Activated naive CD4-positive, alpha-beta T cell treated with anti-CD3 and anti-CD28 coated beads for 36 hours (primary cell): ENCODE measurements at regions of chr20 and their contacts with region 1.

Region 1: GRCh38 chr20:63537525-63538203 is 488 bp upstream of the PTK6 start:
- DNase-seq: peak; percentile 98
- H3K4me3 Mint-ChIP-seq: peak overlapping the region; percentile 74
- H3K27ac Mint-ChIP-seq: peak overlapping the region; percentile 84
- H3K4me1 Mint-ChIP-seq: peaks cover 11% of the 10 kb centered on the region
- H3K27me3 Mint-ChIP-seq: no peaks in the 10 kb centered on the region

Region 2: GRCh38 chr20:63442100-63442493 is 95.6 kb before region 1 on chr20:
- CTCF ChIA-PET with region 1: no interaction called
- intact Hi-C with region 1: loop called (anchors 5 kb)
- DNase-seq: peak; percentile 85
- H3K4me3 Mint-ChIP-seq: no peak overlapping the region
- H3K27ac Mint-ChIP-seq: no peak overlapping the region
- H3K4me1 Mint-ChIP-seq: peaks cover 20% of the 10 kb centered on the region
- H3K27me3 Mint-ChIP-seq: peaks cover 1% of the 10 kb centered on the region

Region 3: GRCh38 chr20:63471983-63472831 is 65.5 kb before region 1 on chr20 and contains the start of gene KCNQ2:
- CTCF ChIA-PET with region 1: no interaction called
- intact Hi-C with region 1: no loop called
- DNase-seq: no peak
- H3K4me3 Mint-ChIP-seq: no peak within 1 kb of the TSS
- H3K27ac Mint-ChIP-seq: no peak within 1 kb of the TSS
- H3K4me1 Mint-ChIP-seq: peaks cover 3% of the 10 kb centered on the region
- H3K27me3 Mint-ChIP-seq: peaks cover 33% of the 10 kb centered on the region
- total RNA-seq, gene KCNQ2: not detected

Region 4: GRCh38 chr20:63580796-63581461 is 43.3 kb after region 1 on chr20:
- CTCF ChIA-PET with region 1: interaction called, 3 read pairs
- intact Hi-C with region 1: loop called (anchors 2 kb)
- DNase-seq: peak; percentile 88
- H3K4me3 Mint-ChIP-seq: no peak overlapping the region
- H3K27ac Mint-ChIP-seq: no peak overlapping the region
- H3K4me1 Mint-ChIP-seq: peaks cover 5% of the 10 kb centered on the region
- H3K27me3 Mint-ChIP-seq: no peaks in the 10 kb centered on the region

Region 5: GRCh38 chr20:63657937-63658748 is 120.5 kb after region 1 on chr20 and contains the start of gene RTEL1:
- CTCF ChIA-PET with region 1: interaction called, 3 read pairs
- intact Hi-C with region 1: loop called (anchors 1 kb)
- DNase-seq: peak; percentile 88
- H3K4me3 Mint-ChIP-seq: peak within 1 kb of the TSS; percentile 98
- H3K27ac Mint-ChIP-seq: peak within 1 kb of the TSS; percentile 93
- H3K4me1 Mint-ChIP-seq: peaks cover 38% of the 10 kb centered on the region
- H3K27me3 Mint-ChIP-seq: no peaks in the 10 kb centered on the region
- total RNA-seq, gene RTEL1: 33.6 to 34.8 TPM

Region 6: GRCh38 chr20:63791497-63792156 is 254.0 kb after region 1 on chr20:
- CTCF ChIA-PET with region 1: interaction called, 3 read pairs
- intact Hi-C with region 1: loop called (anchors 1 kb)
- DNase-seq: no peak
- H3K4me3 Mint-ChIP-seq: no peak overlapping the region
- H3K27ac Mint-ChIP-seq: no peak overlapping the region
- H3K4me1 Mint-ChIP-seq: peaks cover 5% of the 10 kb centered on the region
- H3K27me3 Mint-ChIP-seq: peaks cover 5% of the 10 kb centered on the region

Region 7: DNA sequence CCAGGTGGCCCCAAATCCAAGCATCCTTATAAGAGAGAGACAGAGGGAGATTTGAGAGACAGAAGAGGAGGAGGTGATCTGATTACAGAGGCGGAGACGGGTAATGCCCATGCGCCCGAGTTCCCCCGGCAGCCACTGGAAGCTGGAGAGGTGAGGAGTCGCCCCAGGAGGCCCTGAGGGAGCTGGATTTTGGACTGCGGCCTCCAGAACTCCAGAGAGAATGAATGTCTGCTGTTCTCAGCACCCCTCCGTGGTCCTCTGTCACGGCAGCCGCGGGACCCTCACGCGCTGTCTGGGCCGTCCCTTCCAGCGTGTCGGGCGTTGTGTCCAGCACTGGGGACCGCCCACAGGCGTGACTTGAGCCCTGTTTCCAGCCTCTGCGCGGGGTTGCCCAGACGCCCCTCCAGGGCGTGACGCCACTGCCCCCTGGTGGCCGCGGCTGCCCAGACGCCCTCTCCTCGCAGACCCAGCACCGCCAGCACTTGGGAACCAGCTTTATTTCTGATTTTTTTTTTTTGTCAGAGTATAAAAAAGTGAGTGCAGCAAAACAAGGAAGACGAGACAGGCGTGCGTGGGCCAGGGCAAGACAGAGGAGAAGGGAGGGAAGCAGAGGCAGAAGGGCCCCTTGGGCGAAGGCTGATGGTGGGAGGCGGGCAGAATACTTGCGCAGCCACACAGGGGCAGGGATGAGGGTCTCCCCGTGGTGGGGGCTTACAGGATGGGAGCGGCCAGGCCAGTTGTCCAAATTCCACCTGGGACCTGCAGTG is 436.2 kb after region 1 on chr20:
- CTCF ChIA-PET with region 1: no interaction called
- intact Hi-C with region 1: loop called (anchors 1 kb)
- DNase-seq: peak; percentile 79
- H3K4me3 Mint-ChIP-seq: no peak overlapping the region
- H3K27ac Mint-ChIP-seq: peak overlapping the region; percentile 15
- H3K4me1 Mint-ChIP-seq: peaks cover 41% of the 10 kb centered on the region
- H3K27me3 Mint-ChIP-seq: no peaks in the 10 kb centered on the region

Region 8: DNA sequence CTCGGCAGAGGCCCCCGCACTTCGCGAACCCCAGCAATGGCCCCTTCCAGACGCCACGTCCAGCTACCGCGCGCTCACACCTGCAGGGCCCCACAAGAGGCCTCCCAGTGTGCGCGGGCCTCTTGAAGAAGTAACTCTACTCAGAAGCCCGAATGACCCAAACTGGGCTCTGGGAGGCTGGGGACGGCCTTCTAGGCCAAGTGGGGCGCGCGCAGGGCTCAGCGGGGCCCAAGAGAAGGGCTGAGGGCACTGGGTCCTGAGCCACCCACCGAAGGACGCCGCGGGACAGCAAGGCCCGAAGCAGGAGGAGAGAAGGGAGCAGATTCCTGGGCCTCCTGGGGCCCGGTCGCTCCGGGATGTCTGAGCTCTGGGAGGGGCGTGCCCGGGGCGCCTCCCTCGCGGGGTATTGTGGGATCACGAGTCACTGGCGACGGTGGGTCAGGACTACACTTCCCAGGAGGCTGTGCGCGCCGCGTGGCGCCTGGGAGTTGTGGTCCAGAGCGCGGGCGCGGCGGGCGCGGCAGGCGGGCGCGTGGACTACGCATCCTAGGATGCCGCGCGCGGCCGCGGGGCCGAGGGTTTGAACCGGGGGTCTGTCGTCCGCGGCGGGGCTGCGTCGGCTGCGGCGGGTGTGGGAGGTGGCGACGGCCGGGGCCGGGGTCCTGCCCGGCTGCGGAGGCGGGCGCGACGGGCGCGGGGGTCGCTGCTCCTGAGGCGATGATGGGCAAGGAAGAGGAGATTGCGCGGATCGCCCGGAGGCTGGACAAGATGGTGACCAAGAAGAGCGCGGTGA is 525.1 kb after region 1 on chr20 and contains the start of gene TCEA2:
- CTCF ChIA-PET with region 1: interaction called, 3 read pairs
- intact Hi-C with region 1: loop called (anchors 1 kb)
- DNase-seq: peak; percentile 98
- H3K4me3 Mint-ChIP-seq: peak within 1 kb of the TSS; percentile 89
- H3K27ac Mint-ChIP-seq: peak within 1 kb of the TSS; percentile 54
- H3K4me1 Mint-ChIP-seq: peaks cover 47% of the 10 kb centered on the region
- H3K27me3 Mint-ChIP-seq: no peaks in the 10 kb centered on the region
- total RNA-seq, gene TCEA2: 16.7 to 18.2 TPM